PC-9 (cell line): ENCODE measurements at regions of chr12 and their contacts with region 1.

Region 1: DNA sequence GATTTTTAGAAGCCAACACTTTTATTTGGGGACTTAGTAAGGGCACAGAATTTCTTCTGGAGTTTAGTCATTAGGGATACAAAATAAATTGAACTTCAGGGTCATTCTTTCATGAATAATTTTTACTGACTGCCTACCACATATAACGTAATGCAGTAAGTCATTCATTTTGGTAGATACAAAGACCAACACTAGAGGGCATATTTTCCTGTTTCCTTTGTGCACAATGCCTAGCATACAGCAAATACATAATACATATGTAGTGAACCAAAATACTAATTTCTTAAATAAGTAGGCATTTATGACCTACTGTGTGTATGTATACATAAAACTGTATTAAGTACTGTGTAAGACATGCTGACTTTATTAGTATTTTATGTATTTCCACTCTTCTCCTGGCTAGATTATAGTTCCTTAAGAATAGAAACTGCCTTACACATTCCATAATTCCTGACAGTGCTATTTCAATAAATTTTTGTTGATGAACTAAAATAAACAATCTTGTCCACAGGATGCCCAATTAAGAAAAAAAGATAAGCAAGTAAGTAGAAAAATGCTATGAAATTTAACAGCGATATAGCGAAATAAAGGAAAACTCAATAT is 47.9 kb downstream of the PPP1R12A start:
- DNase-seq: peak in 1 of 2 experiments; percentile 47
- H3K4me3 ChIP-seq: no peak overlapping the region
- H3K27ac ChIP-seq: no peak overlapping the region
- H3K4me1 ChIP-seq: no peaks in the 10 kb centered on the region
- H3K27me3 ChIP-seq: no peaks in the 10 kb centered on the region
- CTCF ChIP-seq: peak; percentile 77

Region 2: GRCh38 chr12:80269803-80270552 is 383.0 kb after region 1 on chr12:
- CTCF ChIA-PET with region 1: interaction called, 4 read pairs
- POLR2A ChIA-PET with region 1: no interaction called
- intact Hi-C with region 1: loop called (anchors 10 kb)
- DNase-seq: no peak
- H3K4me3 ChIP-seq: no peak overlapping the region
- H3K27ac ChIP-seq: no peak overlapping the region
- H3K4me1 ChIP-seq: peaks cover 20% of the 10 kb centered on the region
- H3K27me3 ChIP-seq: no peaks in the 10 kb centered on the region
- CTCF ChIP-seq: peak; percentile 84

Region 3: GRCh38 chr12:80580254-80580653 is 693.2 kb after region 1 on chr12:
- CTCF ChIA-PET with region 1: no interaction called
- POLR2A ChIA-PET with region 1: no interaction called
- intact Hi-C with region 1: no loop called
- DNase-seq: no peak
- H3K4me3 ChIP-seq: no peak overlapping the region
- H3K27ac ChIP-seq: no peak overlapping the region
- H3K4me1 ChIP-seq: no peaks in the 10 kb centered on the region
- H3K27me3 ChIP-seq: no peaks in the 10 kb centered on the region
- CTCF ChIP-seq: no peak